Activated T-helper 2 cell treated with anti-CD3 and anti-CD28 coated beads, Interferon-gamma antibody, Interleukin-2, Interleukin-4, amounts not matched to agents 10 μg/mL and 5 μg/mL and 100 μg/mL, durations not matched to agents 14 hours and 24 hours and 36 hours (primary cell): ENCODE measurements at regions of chr3 and their contacts with region 1.

Region 1: DNA sequence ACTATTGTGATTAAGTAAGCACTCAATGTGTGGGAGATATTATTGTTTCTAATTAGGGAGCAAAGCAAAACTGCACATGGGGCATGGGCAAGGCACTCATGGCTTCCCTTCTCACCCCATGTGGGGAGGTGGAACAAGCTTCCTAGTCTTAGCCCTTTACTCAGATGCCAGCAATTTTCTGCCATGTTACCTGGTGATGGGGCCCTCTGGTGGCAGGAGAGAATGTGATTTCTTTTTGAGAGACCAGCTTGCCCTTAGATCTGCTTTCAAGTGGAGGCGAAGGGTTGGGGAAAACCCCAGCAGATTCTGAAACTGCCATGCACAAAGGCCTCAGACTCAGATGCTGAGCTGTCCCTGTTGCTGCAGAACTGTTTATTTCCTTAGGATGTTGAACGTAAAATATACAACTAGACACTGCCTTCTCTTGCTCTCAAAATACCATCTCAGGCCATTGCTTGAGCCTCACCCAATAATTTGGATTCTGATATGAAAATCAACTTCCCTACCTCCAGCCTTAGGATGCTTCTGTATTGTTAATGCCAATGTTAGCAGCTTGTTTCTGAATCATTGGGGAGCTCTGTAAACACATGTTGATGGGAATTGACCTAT is 130.2 kb upstream of the TPRG1 start:
- DNase-seq: peak; percentile 76
- H3K4me3 Mint-ChIP-seq: no peak overlapping the region
- H3K27ac Mint-ChIP-seq: peak overlapping the region; percentile 25
- H3K4me1 Mint-ChIP-seq: peaks cover 51% of the 10 kb centered on the region
- H3K27me3 Mint-ChIP-seq: no peaks in the 10 kb centered on the region

Region 2: DNA sequence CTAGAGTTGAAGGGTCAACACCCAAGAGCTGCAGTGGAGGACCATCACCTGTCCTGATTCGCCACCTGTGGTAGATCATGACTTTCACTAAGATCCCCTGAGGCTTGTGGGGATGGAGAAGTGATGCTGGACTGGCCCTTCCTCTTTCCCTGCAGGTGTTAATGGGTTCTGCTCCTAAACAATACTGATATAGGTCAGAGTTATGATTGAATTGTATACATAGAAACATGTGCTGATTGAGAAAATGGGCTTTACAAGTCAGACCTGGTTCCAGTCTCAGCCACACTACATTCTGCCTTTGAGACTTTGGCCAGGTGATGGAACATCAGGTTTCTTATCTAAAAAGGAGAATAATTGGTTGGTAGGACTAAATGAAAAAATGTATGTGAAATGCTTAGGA is 288.7 kb before region 1 on chr3:
- intact Hi-C with region 1: loop called (anchors 1 kb)
- DNase-seq: no peak
- H3K4me3 Mint-ChIP-seq: no peak overlapping the region
- H3K27ac Mint-ChIP-seq: no peak overlapping the region
- H3K4me1 Mint-ChIP-seq: peaks cover 19% of the 10 kb centered on the region
- H3K27me3 Mint-ChIP-seq: peaks cover 3% of the 10 kb centered on the region

Region 3: GRCh38 chr3:189132231-189132707 is 90.7 kb after region 1 on chr3:
- intact Hi-C with region 1: loop called (anchors 1 kb)
- DNase-seq: peak; percentile 79
- H3K4me3 Mint-ChIP-seq: peak overlapping the region; percentile 19
- H3K27ac Mint-ChIP-seq: peak overlapping the region; percentile 89
- H3K4me1 Mint-ChIP-seq: peaks cover 24% of the 10 kb centered on the region
- H3K27me3 Mint-ChIP-seq: no peaks in the 10 kb centered on the region

Region 4: DNA sequence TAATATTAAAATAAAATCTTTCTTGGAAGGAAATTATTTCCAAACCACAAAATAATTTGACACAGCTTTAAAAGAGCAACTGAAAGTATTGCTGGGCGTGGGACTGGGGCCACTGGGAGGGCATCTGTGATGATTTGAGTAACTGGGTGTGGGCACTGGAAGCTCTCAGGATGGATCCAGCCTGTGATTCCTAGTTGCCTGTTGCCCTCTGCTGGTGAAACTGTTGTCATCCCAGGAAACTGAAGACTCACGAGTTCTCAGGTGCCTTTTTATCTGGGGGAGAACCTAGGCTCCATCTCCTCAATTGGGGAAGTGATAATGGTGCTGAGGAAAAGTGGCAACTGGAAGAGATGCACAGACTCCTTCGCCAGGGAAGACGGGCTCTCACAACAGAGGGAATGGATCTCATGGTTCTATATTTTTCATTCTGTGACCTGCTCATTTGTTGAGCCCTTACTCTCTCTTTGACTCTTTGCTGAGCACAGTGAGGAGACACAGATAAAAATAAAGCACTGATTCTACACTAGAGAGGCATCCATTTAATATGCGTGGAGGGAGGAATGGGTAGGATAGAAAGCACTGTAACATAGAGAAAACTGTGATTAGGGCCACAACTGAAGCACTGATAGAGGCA is 191.8 kb after region 1 on chr3:
- intact Hi-C with region 1: loop called (anchors 2 kb)
- DNase-seq: no peak
- H3K4me3 Mint-ChIP-seq: no peak overlapping the region
- H3K27ac Mint-ChIP-seq: no peak overlapping the region
- H3K4me1 Mint-ChIP-seq: peaks cover 48% of the 10 kb centered on the region
- H3K27me3 Mint-ChIP-seq: peaks cover 18% of the 10 kb centered on the region